Activated B cell treated with CpG ODN at 0.5 μM for 24 hours (primary cell): ENCODE measurements at regions of chr11 and their contacts with region 1.

Region 1: GRCh38 chr11:78432058-78432515 is 14.5 kb upstream of the GAB2 start:
- DNase-seq: no peak
- ATAC-seq: no peak
- H3K4me3 Mint-ChIP-seq: no peak overlapping the region
- H3K27ac Mint-ChIP-seq: peak overlapping the region; percentile 41
- H3K4me1 Mint-ChIP-seq: peaks cover 40% of the 10 kb centered on the region
- H3K27me3 Mint-ChIP-seq: no peaks in the 10 kb centered on the region
- CTCF ChIP-seq: no peak

Region 2: GRCh38 chr11:78228467-78228866 is 203.6 kb before region 1 on chr11:
- CTCF ChIA-PET with region 1: interaction called, 23 read pairs
- POLR2A ChIA-PET with region 1: interaction called, 3 read pairs
- intact Hi-C with region 1: loop called (anchors 1 kb)
- DNase-seq: no peak
- ATAC-seq: peak; percentile 66
- H3K4me3 Mint-ChIP-seq: no peak overlapping the region
- H3K27ac Mint-ChIP-seq: no peak overlapping the region
- H3K4me1 Mint-ChIP-seq: peaks cover 42% of the 10 kb centered on the region
- H3K27me3 Mint-ChIP-seq: no peaks in the 10 kb centered on the region
- CTCF ChIP-seq: no peak

Region 3: GRCh38 chr11:78365381-78365792 is 66.7 kb before region 1 on chr11:
- CTCF ChIA-PET with region 1: no interaction called
- POLR2A ChIA-PET with region 1: no interaction called
- intact Hi-C with region 1: no loop called
- DNase-seq: no peak
- ATAC-seq: no peak
- H3K4me3 Mint-ChIP-seq: no peak overlapping the region
- H3K27ac Mint-ChIP-seq: no peak overlapping the region
- H3K4me1 Mint-ChIP-seq: peaks cover 14% of the 10 kb centered on the region
- H3K27me3 Mint-ChIP-seq: no peaks in the 10 kb centered on the region
- CTCF ChIP-seq: no peak

Region 4: DNA sequence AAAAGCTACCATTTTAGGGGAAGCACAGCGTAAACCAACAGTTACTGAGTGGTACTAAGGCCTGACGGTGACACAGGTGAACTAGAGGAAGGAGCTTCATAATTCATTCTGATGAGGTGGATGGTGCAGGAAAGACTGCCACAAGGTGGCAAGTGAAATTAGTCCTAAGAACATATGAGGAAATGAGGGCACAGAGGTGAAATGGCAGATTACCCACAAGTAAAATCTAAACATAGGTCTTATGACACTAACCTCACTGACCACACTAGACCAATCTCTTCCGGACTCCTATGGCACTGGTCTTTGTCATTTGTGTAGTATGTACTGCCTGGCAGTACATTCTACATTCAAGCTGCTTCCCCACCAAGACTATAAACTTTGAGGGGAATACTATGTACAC is 34.7 kb before region 1 on chr11:
- CTCF ChIA-PET with region 1: no interaction called
- POLR2A ChIA-PET with region 1: interaction called, 5 read pairs
- intact Hi-C with region 1: loop called (anchors 1 kb)
- DNase-seq: no peak
- ATAC-seq: peak; percentile 81
- H3K4me3 Mint-ChIP-seq: no peak overlapping the region
- H3K27ac Mint-ChIP-seq: peak overlapping the region; percentile 19
- H3K4me1 Mint-ChIP-seq: peaks cover 25% of the 10 kb centered on the region
- H3K27me3 Mint-ChIP-seq: no peaks in the 10 kb centered on the region
- CTCF ChIP-seq: no peak

Region 5: DNA sequence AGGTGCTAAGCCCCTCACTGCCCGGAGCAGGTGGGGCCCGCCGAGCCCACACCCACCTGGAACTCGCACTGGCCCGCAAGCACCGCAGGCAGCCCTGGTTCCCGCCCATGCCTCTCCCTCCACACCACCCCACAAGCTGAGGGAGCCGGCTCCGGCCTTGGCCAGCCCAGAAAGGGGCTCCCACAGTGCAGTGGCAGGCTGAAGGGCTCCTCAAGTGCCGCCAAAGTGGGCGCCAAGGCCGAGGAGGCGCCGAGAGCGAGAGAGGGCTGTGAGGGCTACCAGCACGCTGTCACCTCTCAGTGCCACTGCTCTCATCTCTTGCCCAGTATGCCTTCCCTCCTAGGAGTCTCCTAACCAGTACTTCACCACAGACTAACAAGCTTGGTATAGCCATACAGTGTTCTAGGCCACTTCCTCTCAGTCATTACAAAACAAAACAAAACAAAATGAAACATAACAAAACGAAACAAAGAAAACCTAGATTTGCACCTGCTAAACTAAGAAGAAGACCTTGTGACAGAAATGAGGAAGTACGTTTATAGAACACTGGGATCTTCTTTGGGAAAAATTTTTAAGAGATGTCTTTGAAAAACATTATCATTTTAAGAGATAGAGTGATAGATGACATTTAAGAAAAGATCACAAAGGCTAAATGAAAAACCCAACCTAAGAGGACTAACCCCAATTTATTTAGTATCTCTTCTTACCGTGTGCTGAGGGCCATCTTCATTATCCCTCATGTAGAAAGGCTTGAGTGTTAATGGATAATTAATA is 33.3 kb after region 1 on chr11:
- CTCF ChIA-PET with region 1: interaction called, 3 read pairs
- POLR2A ChIA-PET with region 1: interaction called, 15 read pairs
- intact Hi-C with region 1: no loop called
- DNase-seq: peak; percentile 35
- ATAC-seq: peak; percentile 93
- H3K4me3 Mint-ChIP-seq: peak overlapping the region; percentile 64
- H3K27ac Mint-ChIP-seq: peak overlapping the region; percentile 90
- H3K4me1 Mint-ChIP-seq: peaks cover 44% of the 10 kb centered on the region
- H3K27me3 Mint-ChIP-seq: no peaks in the 10 kb centered on the region
- CTCF ChIP-seq: no peak

Region 6: DNA sequence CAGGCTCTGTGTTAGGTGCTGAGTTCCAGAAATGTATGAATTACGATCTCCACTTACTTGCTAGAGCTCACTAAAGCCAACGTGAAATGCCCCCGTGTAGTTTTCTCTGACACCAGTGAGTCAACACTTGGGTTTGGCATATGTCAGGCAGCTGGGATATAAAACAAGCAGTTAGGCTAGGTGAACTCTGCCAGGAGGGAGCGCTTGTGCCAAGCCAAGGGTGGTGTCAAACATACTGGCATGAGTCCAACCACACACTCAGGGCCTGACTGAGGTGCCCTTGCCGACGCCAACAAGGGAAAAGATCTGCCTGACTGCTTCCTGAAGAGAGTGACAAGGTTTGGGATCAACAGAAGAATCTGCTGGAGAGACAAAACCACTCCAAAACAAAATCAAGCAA is 310.3 kb after region 1 on chr11:
- CTCF ChIA-PET with region 1: no interaction called
- POLR2A ChIA-PET with region 1: no interaction called
- intact Hi-C with region 1: no loop called
- DNase-seq: no peak
- ATAC-seq: no peak
- H3K4me3 Mint-ChIP-seq: no peak overlapping the region
- H3K27ac Mint-ChIP-seq: no peak overlapping the region
- H3K4me1 Mint-ChIP-seq: no peaks in the 10 kb centered on the region
- H3K27me3 Mint-ChIP-seq: no peaks in the 10 kb centered on the region
- CTCF ChIP-seq: no peak